ENCODE measurements at regions of chr7 and their contacts with region 1.

Region 1: GRCh38 chr7:156949541-156950380 is at the start of gene NOM1:
- DNase-seq: peak; percentile 86
- H3K4me3 Mint-ChIP-seq: peak within 1 kb of the TSS; percentile 90
- H3K27ac Mint-ChIP-seq: peak within 1 kb of the TSS; percentile 65
- H3K4me1 Mint-ChIP-seq: peaks cover 11% of the 10 kb centered on the region
- H3K27me3 Mint-ChIP-seq: no peaks in the 10 kb centered on the region
- CTCF ChIP-seq: peak; percentile 90
- total RNA-seq, gene NOM1: 25.9 and 34.1 TPM in 2 replicates

Region 2: DNA sequence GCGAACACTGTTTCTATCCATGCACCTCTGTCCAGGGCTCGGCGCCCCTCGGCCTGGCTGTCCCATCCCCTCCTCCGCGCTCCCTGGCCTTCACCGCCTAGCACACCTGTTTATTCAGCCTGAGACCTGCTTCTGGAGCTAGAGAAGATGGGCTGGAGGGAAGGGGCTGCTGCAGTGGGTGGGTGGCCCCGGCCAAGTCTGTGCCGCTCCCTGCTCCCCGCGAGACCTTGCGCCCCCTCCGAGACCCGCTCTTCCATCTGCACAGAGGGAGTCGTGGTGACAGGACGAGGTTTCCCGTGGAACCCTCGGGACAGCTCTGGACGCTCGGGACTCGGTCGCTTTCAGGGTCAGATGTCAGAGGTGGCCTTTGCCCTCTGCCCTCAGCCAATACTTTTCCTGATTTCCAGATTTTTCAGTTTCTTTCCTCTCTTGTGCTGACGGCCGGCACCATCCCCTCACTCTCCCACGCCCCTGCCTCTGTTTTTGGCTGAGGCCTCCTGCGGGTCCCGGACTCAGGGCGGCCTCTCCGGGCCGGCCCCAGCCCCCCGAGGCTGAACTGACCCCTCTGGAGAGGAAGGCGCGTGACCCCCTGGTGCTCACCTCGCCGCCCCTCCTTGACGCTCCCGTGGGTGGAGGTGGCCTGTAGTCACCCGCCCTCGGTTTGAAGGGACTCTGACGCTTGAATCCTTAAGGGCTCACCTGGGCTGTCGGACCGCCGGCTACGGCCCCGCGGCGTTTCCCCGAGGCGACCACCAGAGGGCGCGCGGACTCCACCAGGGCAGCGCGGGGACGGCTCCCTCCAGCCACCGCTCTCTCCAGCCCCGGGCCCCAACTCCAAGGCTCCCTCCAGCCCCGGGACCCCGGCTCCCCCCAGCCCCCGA is 1153.1 kb before region 1 on chr7:
- CTCF ChIA-PET with region 1: no interaction called
- POLR2A ChIA-PET with region 1: no interaction called
- intact Hi-C with region 1: loop called (anchors 5 kb)
- DNase-seq: peak; percentile 42
- H3K4me3 Mint-ChIP-seq: no peak overlapping the region
- H3K27ac Mint-ChIP-seq: no peak overlapping the region
- H3K4me1 Mint-ChIP-seq: no peaks in the 10 kb centered on the region
- H3K27me3 Mint-ChIP-seq: no peaks in the 10 kb centered on the region
- CTCF ChIP-seq: peak; percentile 98

Region 3: DNA sequence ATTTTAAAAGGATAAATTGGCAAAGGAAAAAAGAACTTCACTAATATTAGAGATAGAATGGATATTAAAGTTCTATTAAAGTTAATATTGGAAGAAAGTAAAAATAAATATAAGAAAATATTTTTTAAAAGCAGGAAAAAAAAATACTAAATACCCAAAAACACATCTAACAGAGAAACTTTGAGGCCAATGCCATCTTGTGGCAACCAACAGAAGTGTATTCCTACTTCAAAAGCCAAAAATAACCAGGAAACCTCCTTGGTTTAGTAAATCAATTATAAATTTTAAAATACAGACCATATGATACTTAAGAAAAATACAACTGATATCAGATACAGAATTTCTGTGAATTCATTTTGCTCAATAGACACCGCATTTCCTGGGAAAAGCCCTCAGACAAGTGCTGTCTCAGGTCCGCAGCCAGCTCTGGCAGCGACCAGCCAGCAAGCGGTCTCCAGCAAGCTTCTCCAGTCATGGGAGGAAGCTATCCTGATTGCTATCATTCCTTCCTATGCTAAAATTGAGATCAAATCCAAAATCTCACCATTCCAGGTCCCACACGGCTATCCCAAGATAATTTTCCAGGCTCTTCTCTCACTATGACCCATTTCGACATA is 122.1 kb before region 1 on chr7:
- CTCF ChIA-PET with region 1: interaction called, 3 read pairs
- POLR2A ChIA-PET with region 1: interaction called, 4 read pairs
- intact Hi-C with region 1: loop called (anchors 5 kb)
- DNase-seq: peak; percentile 24
- H3K4me3 Mint-ChIP-seq: no peak overlapping the region
- H3K27ac Mint-ChIP-seq: no peak overlapping the region
- H3K4me1 Mint-ChIP-seq: peaks cover 18% of the 10 kb centered on the region
- H3K27me3 Mint-ChIP-seq: no peaks in the 10 kb centered on the region
- CTCF ChIP-seq: peak; percentile 44

Region 4: GRCh38 chr7:156892821-156893706 is 56.7 kb before region 1 on chr7 and contains the start of gene LMBR1:
- CTCF ChIA-PET with region 1: interaction called, 10 read pairs
- POLR2A ChIA-PET with region 1: interaction called, 45 read pairs
- intact Hi-C with region 1: loop called (anchors 2 kb)
- DNase-seq: peak; percentile 93
- H3K4me3 Mint-ChIP-seq: peak within 1 kb of the TSS; percentile 80
- H3K27ac Mint-ChIP-seq: peak within 1 kb of the TSS; percentile 92
- H3K4me1 Mint-ChIP-seq: peaks cover 34% of the 10 kb centered on the region
- H3K27me3 Mint-ChIP-seq: no peaks in the 10 kb centered on the region
- CTCF ChIP-seq: peak; percentile 40
- total RNA-seq, gene LMBR1: 95.6 and 105 TPM in 2 replicates

Region 5: DNA sequence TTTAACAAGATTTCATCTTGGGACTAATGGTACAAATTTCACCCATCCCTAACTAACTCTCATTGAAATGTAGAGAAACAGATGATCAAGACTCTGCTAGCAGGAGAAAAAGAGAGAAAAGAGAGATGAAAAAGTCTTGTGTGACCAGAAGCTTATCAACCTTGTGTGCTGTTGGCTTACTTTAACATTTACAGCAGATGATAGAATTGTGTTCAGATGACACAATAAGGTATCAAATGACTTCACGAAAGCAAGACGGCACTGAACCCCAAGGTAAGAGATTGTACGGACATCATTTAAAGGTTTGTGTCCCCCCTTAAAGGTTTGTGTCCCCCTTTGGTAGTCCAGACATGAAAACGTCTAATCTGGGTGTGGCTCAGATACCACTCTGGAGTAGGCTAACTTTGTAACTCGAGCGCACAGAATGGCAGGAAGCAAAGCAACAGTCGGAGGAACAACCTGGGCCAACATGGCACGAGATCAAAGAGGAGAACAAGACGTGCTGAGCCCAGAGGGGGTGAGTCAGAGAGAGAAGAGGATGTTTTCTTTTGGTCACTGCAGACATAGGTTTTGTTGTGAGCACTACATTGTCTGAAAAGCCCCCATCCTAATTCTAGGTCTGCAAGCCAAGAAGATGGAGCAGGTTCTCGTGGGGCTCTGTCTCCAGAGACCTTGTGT is 46.4 kb before region 1 on chr7:
- CTCF ChIA-PET with region 1: interaction called, 9 read pairs
- POLR2A ChIA-PET with region 1: interaction called, 11 read pairs
- intact Hi-C with region 1: no loop called
- DNase-seq: peak; percentile 98
- H3K4me3 Mint-ChIP-seq: peak overlapping the region; percentile 60
- H3K27ac Mint-ChIP-seq: peak overlapping the region; percentile 91
- H3K4me1 Mint-ChIP-seq: peaks cover 35% of the 10 kb centered on the region
- H3K27me3 Mint-ChIP-seq: no peaks in the 10 kb centered on the region
- CTCF ChIP-seq: no peak